ENCODE measurements at regions of chr9 and their contacts with region 1.

Region 1: DNA sequence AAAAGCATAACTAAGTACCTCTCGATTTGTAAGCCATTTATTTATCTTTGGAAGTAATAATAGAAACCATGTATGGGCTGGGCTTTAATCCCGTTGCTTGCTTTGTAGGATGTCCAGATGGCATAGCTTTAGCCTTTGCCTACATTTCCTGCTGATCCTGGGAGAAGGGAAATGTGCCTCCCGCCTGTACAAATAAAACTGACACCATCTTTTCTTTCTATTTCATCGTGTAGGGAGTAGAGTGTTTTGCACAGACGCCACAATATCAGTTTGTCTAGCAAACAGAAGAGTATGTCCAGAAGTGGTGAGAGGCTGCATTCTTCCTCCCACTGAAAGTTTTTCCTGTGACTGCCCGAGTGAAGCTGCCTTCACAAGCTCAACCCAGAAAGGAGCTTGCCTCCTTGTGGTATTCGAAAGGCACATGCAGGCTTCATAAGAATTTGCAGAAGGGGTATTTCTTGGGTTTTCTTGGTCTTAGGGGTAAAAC is 24.7 kb upstream of the TJP2 start:
- DNase-seq: peak; percentile 96
- H3K4me3 ChIP-seq: peak overlapping the region in 1 of 3 experiments; percentile 45
- H3K27ac ChIP-seq: peak overlapping the region; percentile 51
- H3K4me1 ChIP-seq: peaks cover 22% of the 10 kb centered on the region
- H3K27me3 ChIP-seq: no peaks in the 10 kb centered on the region
- CTCF ChIP-seq: peak; percentile 21 to 49
- POLR2A ChIP-seq: peak; percentile 47

Region 2: GRCh38 chr9:69035438-69036308 is 113.7 kb before region 1 on chr9 and contains the start of gene FXN:
- CTCF ChIA-PET with region 1: interaction called, 4 read pairs
- POLR2A ChIA-PET with region 1: no interaction called
- dilution Hi-C with region 1: no loop called
- intact Hi-C with region 1: loop called (anchors 1 kb)
- DNase-seq: peak; percentile 85
- H3K4me3 ChIP-seq: peak within 1 kb of the TSS; percentile 44 to 81 (median 67)
- H3K27ac ChIP-seq: peak within 1 kb of the TSS; percentile 31
- H3K4me1 ChIP-seq: peaks cover 18% of the 10 kb centered on the region
- H3K27me3 ChIP-seq: no peaks in the 10 kb centered on the region
- CTCF ChIP-seq: peak; percentile 99 to 100
- POLR2A ChIP-seq: peak; percentile 52
- total RNA-seq, gene FXN: 17.1 and 21.2 TPM in 2 replicates

Region 3: GRCh38 chr9:69097064-69097463 is 52.3 kb before region 1 on chr9:
- CTCF ChIA-PET with region 1: interaction called, 3 read pairs
- POLR2A ChIA-PET with region 1: no interaction called
- dilution Hi-C with region 1: no loop called
- intact Hi-C with region 1: loop called (anchors 1 kb)
- DNase-seq: peak; percentile 93
- H3K4me3 ChIP-seq: no peak overlapping the region
- H3K27ac ChIP-seq: peak overlapping the region; percentile 89
- H3K4me1 ChIP-seq: peaks cover 41% of the 10 kb centered on the region
- H3K27me3 ChIP-seq: no peaks in the 10 kb centered on the region
- CTCF ChIP-seq: no peak
- POLR2A ChIP-seq: peak; percentile 82

Region 4: GRCh38 chr9:69136779-69137178 is 12.6 kb before region 1 on chr9:
- CTCF ChIA-PET with region 1: interaction called, 17 read pairs
- POLR2A ChIA-PET with region 1: no interaction called
- dilution Hi-C with region 1: no loop called
- intact Hi-C with region 1: no loop called
- DNase-seq: peak; percentile 49
- H3K4me3 ChIP-seq: no peak overlapping the region
- H3K27ac ChIP-seq: peak overlapping the region; percentile 38
- H3K4me1 ChIP-seq: peaks cover 12% of the 10 kb centered on the region
- H3K27me3 ChIP-seq: no peaks in the 10 kb centered on the region
- CTCF ChIP-seq: no peak
- POLR2A ChIP-seq: no peak

Region 5: DNA sequence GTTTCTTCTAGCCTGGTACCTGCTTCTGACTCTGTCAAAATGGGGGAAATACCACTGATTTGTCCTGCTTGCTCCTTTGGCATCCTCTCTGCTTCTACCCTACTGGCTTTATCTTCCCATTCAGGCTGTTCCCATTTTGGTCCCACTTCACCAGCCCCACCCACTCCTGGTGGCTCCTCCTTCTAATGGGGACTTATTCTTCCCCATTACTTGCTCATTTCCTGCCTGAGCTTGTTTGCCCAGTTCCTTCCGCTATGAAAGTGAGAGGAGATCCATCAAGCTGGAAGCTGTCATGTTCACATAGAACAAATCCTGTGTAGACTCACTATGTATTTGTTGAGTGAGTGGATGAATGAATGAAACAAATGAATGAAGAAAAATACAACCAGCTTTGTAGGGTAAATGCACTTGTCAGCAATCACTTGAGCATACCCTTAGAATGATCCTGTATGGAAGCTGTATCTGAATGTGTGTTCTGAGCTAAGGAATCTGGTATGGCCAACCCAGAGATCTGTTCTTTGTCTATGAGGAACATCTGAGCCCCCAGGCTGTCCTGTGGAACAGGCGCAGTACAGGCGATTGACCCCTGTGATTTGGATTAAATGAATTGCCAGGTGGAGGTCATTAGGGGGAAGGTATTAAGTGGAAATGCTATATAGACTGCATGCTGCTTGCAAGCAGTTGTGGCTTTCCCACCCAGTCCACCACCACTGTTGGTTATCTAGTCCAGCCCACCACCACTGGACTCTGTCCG is 433.4 kb after region 1 on chr9:
- CTCF ChIA-PET with region 1: no interaction called
- POLR2A ChIA-PET with region 1: no interaction called
- dilution Hi-C with region 1: no loop called
- intact Hi-C with region 1: no loop called
- DNase-seq: peak; percentile 62
- H3K4me3 ChIP-seq: no peak overlapping the region
- H3K27ac ChIP-seq: peak overlapping the region; percentile 63
- H3K4me1 ChIP-seq: peaks cover 35% of the 10 kb centered on the region
- H3K27me3 ChIP-seq: no peaks in the 10 kb centered on the region
- CTCF ChIP-seq: no peak
- POLR2A ChIP-seq: no peak

Measured in endothelial cell of umbilical vein (primary cell).